MCF 10A (cell line): ENCODE measurements at regions of chr5 and their contacts with region 1.

Region 1: DNA sequence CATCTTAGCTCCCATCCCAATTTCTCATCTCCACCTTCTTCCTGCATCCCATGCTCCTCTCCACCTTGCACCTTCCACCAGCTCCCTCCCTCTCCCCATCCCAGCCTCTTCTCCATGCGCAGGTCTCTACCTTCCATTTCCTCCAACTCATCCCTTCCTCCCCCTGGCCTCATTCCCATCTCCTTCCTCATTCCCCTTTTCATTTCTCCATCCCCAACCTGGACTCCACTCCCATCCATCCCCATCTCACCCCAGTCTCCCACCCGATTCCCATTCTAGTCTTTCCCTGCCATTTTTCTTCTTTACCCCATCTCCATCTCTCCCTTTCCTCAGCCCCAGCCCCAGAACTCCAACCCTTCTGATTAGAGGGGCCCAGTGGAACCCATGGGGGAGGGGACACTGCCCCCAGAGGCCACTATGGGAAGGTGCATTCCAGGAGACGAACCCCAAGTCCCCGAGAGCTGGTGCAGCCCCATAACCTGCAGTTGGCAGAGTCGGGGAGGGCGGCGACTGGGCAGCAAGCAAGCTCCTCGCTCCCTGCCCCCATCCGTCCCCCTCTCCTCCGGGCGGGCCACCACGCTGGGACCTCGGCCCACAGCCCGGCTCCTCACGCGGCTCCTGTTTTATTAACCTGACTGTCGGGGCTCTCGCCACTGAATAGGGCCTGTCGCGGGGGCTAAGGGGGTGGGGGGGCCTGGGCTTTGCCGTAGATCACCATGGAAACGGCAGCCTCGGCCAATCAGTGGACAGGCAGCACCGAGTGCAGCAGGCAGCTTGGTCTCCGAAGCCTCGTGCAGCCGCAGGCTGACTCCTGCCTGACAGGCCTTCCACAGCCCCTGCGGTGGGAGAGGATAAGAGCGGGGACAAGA is 66.7 kb downstream of the PCDH1 start:
- DNase-seq: peak; percentile 32
- H3K4me3 Mint-ChIP-seq: no peak overlapping the region
- H3K27ac Mint-ChIP-seq: no peak overlapping the region
- H3K4me1 Mint-ChIP-seq: no peaks in the 10 kb centered on the region
- H3K27me3 Mint-ChIP-seq: peaks cover 31% of the 10 kb centered on the region
- CTCF ChIP-seq: peak; percentile 74

Region 2: GRCh38 chr5:141664732-141665461 is 146.6 kb before region 1 on chr5:
- CTCF ChIA-PET with region 1: interaction called, 6 read pairs
- POLR2A ChIA-PET with region 1: no interaction called
- intact Hi-C with region 1: loop called (anchors 1 kb)
- DNase-seq: peak; percentile 83
- H3K4me3 Mint-ChIP-seq: no peak overlapping the region
- H3K27ac Mint-ChIP-seq: no peak overlapping the region
- H3K4me1 Mint-ChIP-seq: peaks cover 4% of the 10 kb centered on the region
- H3K27me3 Mint-ChIP-seq: no peaks in the 10 kb centered on the region
- CTCF ChIP-seq: peak; percentile 94

Region 3: GRCh38 chr5:141701360-141702119 is 110.0 kb before region 1 on chr5:
- CTCF ChIA-PET with region 1: interaction called, 66 read pairs
- POLR2A ChIA-PET with region 1: no interaction called
- intact Hi-C with region 1: loop called (anchors 1 kb)
- DNase-seq: no peak
- H3K4me3 Mint-ChIP-seq: no peak overlapping the region
- H3K27ac Mint-ChIP-seq: no peak overlapping the region
- H3K4me1 Mint-ChIP-seq: no peaks in the 10 kb centered on the region
- H3K27me3 Mint-ChIP-seq: peaks cover 19% of the 10 kb centered on the region
- CTCF ChIP-seq: no peak

Region 4: DNA sequence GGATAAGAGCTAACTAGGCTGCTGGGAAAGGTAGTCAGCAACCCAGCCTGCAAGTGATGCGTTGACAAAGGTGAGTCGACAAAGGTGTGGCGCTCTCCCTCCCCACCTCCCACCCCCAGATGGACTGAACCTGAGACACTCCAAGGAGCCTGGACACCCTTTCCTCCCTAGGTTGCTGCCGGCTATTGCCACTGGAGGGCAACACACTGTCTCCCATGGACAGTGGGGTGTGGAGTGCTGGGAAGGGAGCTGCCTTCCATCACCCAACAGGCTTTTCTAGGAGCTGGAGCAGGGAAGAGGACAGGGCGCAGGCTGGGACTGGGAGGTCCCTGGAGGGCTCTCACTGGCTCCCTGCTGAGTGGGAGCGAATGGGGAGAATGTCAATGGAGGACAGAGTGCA is 54.1 kb before region 1 on chr5:
- CTCF ChIA-PET with region 1: interaction called, 3 read pairs
- POLR2A ChIA-PET with region 1: no interaction called
- intact Hi-C with region 1: loop called (anchors 1 kb)
- DNase-seq: peak; percentile 71
- H3K4me3 Mint-ChIP-seq: no peak overlapping the region
- H3K27ac Mint-ChIP-seq: no peak overlapping the region
- H3K4me1 Mint-ChIP-seq: no peaks in the 10 kb centered on the region
- H3K27me3 Mint-ChIP-seq: peaks cover 61% of the 10 kb centered on the region
- CTCF ChIP-seq: peak; percentile 49

Region 5: GRCh38 chr5:141787376-141787775 is 24.1 kb before region 1 on chr5:
- CTCF ChIA-PET with region 1: interaction called, 10 read pairs
- POLR2A ChIA-PET with region 1: interaction called, 4 read pairs
- intact Hi-C with region 1: no loop called
- DNase-seq: peak; percentile 38
- H3K4me3 Mint-ChIP-seq: no peak overlapping the region
- H3K27ac Mint-ChIP-seq: no peak overlapping the region
- H3K4me1 Mint-ChIP-seq: peaks cover 6% of the 10 kb centered on the region
- H3K27me3 Mint-ChIP-seq: peaks cover 26% of the 10 kb centered on the region
- CTCF ChIP-seq: no peak

Region 6: GRCh38 chr5:141799507-141800167 is 11.9 kb before region 1 on chr5:
- CTCF ChIA-PET with region 1: interaction called, 13 read pairs
- POLR2A ChIA-PET with region 1: no interaction called
- intact Hi-C with region 1: no loop called
- DNase-seq: no peak
- H3K4me3 Mint-ChIP-seq: no peak overlapping the region
- H3K27ac Mint-ChIP-seq: no peak overlapping the region
- H3K4me1 Mint-ChIP-seq: no peaks in the 10 kb centered on the region
- H3K27me3 Mint-ChIP-seq: peaks cover 31% of the 10 kb centered on the region
- CTCF ChIP-seq: no peak

Region 7: GRCh38 chr5:141825791-141826560 is 14.5 kb after region 1 on chr5:
- CTCF ChIA-PET with region 1: interaction called, 28 read pairs
- POLR2A ChIA-PET with region 1: no interaction called
- intact Hi-C with region 1: no loop called
- DNase-seq: peak; percentile 56
- H3K4me3 Mint-ChIP-seq: no peak overlapping the region
- H3K27ac Mint-ChIP-seq: no peak overlapping the region
- H3K4me1 Mint-ChIP-seq: peaks cover 13% of the 10 kb centered on the region
- H3K27me3 Mint-ChIP-seq: no peaks in the 10 kb centered on the region
- CTCF ChIP-seq: peak; percentile 32

Region 8: DNA sequence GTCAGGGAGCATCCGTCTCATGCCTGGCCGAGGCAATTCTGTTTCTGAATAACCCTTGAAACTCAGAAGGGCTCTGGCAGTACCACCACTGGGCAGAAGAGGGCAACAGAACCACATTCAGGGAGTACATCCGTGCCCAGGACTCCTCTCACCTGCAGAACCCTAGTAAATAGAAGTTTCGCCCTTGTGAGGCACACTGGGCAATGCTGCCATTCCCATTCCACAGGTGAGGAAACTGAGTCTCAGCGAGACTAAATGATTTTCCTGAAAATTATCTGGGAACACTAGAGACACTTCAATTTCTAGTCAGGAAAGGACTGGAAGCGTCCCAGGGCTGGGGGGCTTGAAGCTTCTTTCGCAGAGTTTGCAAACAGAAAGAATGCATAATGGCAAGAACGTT is 799.6 kb after region 1 on chr5:
- CTCF ChIA-PET with region 1: no interaction called
- POLR2A ChIA-PET with region 1: no interaction called
- intact Hi-C with region 1: no loop called
- DNase-seq: peak; percentile 85
- H3K4me3 Mint-ChIP-seq: no peak overlapping the region
- H3K27ac Mint-ChIP-seq: peak overlapping the region; percentile 29
- H3K4me1 Mint-ChIP-seq: peaks cover 5% of the 10 kb centered on the region
- H3K27me3 Mint-ChIP-seq: no peaks in the 10 kb centered on the region
- CTCF ChIP-seq: peak; percentile 99